ENCODE measurements at regions of chr10 and their contacts with region 1.

Region 1: GRCh38 chr10:101272229-101272868 is 43.1 kb upstream of the LBX1 start:
- DNase-seq: peak; percentile 36 to 68
- H3K4me3 ChIP-seq: no peak overlapping the region
- H3K27ac ChIP-seq: no peak overlapping the region
- H3K4me1 ChIP-seq: no peaks in the 10 kb centered on the region
- H3K27me3 ChIP-seq: peaks cover 0 to 53% of the 10 kb centered on the region in 2 donors
- CTCF ChIP-seq: peak; percentile 56 to 65

Region 2: DNA sequence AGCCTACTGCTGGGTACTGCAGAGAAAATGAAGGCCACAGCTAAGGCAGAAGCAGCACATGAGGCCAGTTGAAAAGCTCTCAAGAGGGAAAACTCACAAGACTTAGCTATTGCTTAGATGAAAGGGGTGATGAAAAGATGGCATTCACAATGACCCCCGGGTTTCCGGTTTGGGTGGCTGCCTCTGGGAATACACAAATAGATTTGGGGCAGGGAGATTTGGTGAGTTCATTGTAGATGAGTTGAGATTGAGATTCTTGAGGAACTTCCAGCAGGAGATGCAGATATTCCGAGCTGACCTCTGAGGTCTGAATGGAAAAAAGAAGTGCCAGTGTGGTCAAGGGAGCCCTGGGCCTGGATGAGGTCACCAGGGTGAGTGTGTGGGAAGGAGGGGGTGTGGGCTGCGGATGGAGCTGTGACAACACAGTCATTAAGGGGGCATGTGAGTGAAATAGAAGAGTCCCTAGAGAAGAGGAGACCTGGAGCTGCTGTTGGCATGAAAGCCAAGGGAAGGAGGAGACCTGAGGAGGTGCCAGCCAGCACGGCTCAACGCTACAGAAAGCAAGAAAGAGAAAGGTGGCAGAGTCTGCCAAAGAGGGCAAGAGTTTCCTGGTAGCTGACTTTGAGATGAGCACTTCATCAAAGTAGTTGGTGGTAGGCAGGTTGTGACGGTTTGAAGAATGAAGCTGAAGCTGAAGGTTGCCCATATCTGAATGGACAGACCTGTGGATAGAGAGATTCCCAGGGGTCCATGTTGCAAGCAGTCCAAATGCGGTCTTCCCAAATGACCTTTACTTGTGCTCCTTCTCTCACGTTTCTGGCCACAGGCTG is 692.9 kb before region 1 on chr10:
- intact Hi-C with region 1: no loop called
- DNase-seq: no peak
- H3K4me3 ChIP-seq: no peak overlapping the region
- H3K27ac ChIP-seq: no peak overlapping the region
- H3K4me1 ChIP-seq: no peaks in the 10 kb centered on the region
- H3K27me3 ChIP-seq: peaks cover 0 to 5% of the 10 kb centered on the region in 2 donors
- CTCF ChIP-seq: no peak

Region 3: DNA sequence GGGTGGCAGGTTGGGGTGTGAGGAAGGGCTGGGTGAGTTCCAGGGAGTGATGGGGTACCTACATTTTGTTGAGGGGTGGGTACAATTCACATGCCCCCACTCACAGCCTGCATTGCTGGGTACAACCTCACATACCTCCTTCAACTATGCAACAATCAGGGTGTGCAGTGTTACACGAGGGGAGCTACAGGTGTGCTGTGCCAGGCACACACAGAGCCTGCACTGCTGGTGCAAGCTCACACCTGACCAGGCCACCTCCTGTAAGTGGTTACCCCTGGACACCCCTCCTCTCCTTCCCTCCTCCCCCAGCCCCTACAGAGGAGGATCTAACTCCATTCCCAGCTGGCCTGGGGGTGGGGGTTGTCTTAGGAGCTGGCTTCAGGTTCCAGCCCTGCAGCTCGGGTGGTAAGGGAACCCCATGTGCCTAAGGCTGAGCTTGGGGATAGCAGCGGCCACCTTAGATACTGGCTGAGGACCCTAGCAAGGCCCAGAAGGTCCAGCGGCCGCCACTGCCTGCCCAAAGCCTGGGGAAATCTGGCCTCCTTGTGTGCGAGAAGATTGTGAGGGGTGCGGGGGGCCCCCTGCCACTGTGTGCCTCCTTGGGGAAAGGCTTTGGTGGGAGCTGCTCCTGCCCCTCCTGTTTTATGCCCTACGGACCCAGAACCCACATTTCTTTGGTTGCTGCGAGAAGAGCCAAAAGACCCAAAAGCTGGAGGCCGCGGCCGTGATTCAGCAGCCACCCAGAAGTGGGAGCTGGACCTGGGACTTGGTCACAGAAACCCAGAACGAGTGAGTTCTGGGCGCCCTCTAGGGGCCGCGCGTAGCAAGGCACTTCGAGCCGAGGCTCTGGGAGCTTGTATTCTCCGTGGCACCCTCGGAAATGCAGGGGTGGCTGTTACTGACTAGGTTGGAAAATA is 130.5 kb before region 1 on chr10:
- intact Hi-C with region 1: no loop called
- DNase-seq: peak; percentile 72 to 85
- H3K4me3 ChIP-seq: no peak overlapping the region
- H3K27ac ChIP-seq: no peak overlapping the region
- H3K4me1 ChIP-seq: peaks cover 0 to 36% (median 23%) of the 10 kb centered on the region in 4 donors
- H3K27me3 ChIP-seq: peaks cover 0 to 98% of the 10 kb centered on the region in 2 donors
- CTCF ChIP-seq: peak; percentile 91 to 96

Region 4: DNA sequence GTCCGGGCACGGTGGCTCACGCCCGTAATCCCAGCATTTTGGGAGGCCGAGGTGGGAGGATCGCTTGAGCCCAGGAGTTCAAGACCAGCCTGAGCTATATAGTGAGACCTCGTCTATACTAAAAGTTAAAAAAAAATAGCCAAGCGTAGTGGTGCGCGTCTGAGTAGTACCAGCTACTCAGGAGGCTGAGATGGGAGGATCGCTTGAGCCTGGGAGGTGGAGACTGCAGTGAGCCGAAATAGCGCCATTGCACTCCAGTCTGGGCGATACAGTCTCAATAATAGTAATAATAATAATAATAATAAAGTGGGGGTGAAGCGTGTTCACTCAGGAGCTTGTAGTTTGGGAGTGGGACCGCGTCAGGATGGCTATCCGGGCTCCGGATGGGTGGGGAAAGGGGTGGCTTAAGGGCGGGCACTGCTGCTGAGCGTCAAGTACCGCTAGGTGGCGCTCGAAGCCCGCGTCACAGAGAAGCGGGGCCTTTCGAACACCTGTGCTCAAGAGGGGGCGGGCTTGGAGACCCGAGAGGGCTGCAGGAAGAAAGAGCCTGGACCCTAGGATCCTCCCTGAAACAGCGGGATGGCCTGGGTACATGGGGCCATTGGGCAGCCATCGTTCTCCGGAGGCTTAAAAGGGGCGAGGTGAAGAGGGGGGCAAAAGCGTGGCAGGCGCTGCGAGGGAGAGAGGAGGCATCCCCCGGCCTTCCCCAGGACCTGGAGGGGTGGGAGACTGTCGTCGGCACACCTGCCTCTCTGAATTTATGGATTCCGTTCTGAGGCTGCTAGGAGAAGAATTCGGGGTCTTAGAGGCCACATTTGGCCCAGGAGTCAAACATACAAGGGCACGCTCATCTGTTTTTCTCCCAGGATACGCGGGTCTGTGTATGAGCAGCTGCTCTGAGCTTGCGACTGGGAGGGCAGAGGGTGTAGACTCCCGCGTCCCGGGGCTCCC is 57.6 kb before region 1 on chr10:
- intact Hi-C with region 1: no loop called
- DNase-seq: no peak
- H3K4me3 ChIP-seq: peak overlapping the region in 1 of 2 donors; percentile 10
- H3K27ac ChIP-seq: no peak overlapping the region
- H3K4me1 ChIP-seq: peaks cover 0 to 48% (median 42%) of the 10 kb centered on the region in 4 donors
- H3K27me3 ChIP-seq: peaks cover 8 to 99% of the 10 kb centered on the region in 2 donors
- CTCF ChIP-seq: peak; percentile 63 to 84

Region 5: GRCh38 chr10:101569838-101570766 is 297.8 kb after region 1 on chr10:
- intact Hi-C with region 1: loop called (anchors 10 kb)
- DNase-seq: peak; percentile 76 to 81
- H3K4me3 ChIP-seq: peak overlapping the region; percentile 29 to 51
- H3K27ac ChIP-seq: no peak overlapping the region
- H3K4me1 ChIP-seq: peaks cover 0 to 26% (median 24%) of the 10 kb centered on the region in 4 donors
- H3K27me3 ChIP-seq: peaks cover 11 to 60% of the 10 kb centered on the region in 2 donors
- CTCF ChIP-seq: peak; percentile 79 to 96

Measured in tibial artery (tissue), 4 donors.